H1 (cell line): ENCODE measurements at regions of chr4 and their contacts with region 1.

Region 1: DNA sequence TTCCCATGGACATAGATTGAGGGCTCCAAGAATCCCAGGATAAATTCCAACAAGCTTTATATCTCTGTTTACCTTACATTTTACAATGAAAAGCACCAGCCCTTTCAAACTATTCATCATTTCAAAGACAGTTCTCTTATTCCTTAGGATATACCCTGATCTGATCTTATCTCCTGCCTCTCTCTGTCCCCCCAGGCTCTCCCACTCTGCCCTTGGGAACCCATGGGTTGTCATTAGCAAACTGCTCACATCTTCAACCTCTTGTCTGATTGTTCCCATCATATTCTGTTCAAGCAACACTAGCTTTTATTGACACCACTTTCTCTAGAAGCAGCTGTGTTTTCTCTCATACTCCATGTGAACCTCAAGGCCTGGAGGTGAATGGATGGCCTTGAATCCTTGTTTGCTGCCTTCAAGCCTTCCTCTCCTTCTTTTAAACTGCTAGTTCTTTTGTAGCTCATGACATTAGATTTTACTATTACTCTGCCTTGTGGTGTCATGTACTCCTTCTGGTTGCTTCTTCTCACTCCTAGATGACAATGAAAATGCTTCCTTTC is 149.4 kb upstream of the WDFY3 start:
- DNase-seq: no peak
- H3K4me3 ChIP-seq: no peak overlapping the region
- H3K27ac ChIP-seq: no peak overlapping the region
- H3K4me1 ChIP-seq: no peaks in the 10 kb centered on the region
- H3K27me3 ChIP-seq: no peaks in the 10 kb centered on the region
- CTCF ChIP-seq: no peak
- EP300 ChIP-seq: no peak
- POLR2A ChIP-seq: no peak
- RAD21 ChIP-seq: no peak

Region 2: DNA sequence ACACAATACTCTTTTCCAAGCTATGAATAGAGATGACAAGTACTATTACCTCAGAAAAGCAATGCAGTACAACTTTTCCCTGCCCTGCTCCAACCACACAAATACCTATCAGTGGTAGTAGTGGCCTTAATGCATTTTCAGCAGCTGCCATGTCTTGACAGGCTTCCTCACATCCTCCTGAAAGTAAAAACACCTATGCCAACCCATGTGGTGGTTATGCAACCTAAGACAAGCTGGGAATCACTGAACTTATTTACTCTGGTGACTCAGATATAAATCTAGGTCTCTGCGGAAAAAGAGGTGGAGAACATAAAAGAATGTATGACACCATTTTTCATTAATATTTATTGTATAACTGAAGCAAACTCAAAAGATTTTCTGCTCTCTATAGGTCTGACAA is 163.9 kb before region 1 on chr4:
- CTCF ChIA-PET with region 1: no interaction called
- POLR2A ChIA-PET with region 1: no interaction called
- DNase-seq: no peak
- H3K4me3 ChIP-seq: no peak overlapping the region
- H3K27ac ChIP-seq: no peak overlapping the region
- H3K4me1 ChIP-seq: no peaks in the 10 kb centered on the region; a peak in 1 of 7 replicates
- H3K27me3 ChIP-seq: no peaks in the 10 kb centered on the region
- CTCF ChIP-seq: no peak
- EP300 ChIP-seq: no peak
- POLR2A ChIP-seq: no peak
- RAD21 ChIP-seq: no peak

Region 3: DNA sequence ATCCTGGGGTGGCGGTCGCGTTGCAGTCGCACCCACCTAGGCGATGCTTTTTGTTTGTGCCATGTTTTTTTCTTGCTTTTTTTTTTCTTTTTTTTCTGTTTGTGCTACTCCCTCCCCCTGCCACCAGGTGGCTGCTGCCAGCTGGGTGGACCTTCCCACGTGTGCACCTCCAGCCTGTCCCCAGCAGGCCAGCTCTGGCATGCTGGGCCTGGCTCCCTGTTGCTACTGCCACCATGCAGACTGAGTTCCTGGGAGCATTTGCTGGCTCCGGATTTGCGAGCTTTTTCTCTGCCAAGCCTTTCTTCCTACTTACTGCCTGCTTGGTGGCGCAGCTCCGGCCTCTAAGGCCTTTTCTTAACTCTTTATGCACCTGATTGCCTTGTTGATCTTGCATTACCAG is 11.7 kb after region 1 on chr4:
- CTCF ChIA-PET with region 1: interaction called, 32 read pairs
- POLR2A ChIA-PET with region 1: no interaction called
- DNase-seq: peak; percentile 59 to 62
- H3K4me3 ChIP-seq: no peak overlapping the region
- H3K27ac ChIP-seq: no peak overlapping the region
- H3K4me1 ChIP-seq: peaks cover 2 to 16% (median 10%) of the 10 kb centered on the region in 4 experiments; a peak in 5 of 7 replicates
- H3K27me3 ChIP-seq: no peaks in the 10 kb centered on the region
- CTCF ChIP-seq: peak; percentile 72 to 75 (median 74)
- EP300 ChIP-seq: no peak
- POLR2A ChIP-seq: no peak
- RAD21 ChIP-seq: peak; percentile 39 to 61; a peak in 3 of 4 replicates